Esophagus muscularis mucosa (tissue), 4 donors: ENCODE measurements at regions of chr3 and their contacts with region 1.

Region 1: DNA sequence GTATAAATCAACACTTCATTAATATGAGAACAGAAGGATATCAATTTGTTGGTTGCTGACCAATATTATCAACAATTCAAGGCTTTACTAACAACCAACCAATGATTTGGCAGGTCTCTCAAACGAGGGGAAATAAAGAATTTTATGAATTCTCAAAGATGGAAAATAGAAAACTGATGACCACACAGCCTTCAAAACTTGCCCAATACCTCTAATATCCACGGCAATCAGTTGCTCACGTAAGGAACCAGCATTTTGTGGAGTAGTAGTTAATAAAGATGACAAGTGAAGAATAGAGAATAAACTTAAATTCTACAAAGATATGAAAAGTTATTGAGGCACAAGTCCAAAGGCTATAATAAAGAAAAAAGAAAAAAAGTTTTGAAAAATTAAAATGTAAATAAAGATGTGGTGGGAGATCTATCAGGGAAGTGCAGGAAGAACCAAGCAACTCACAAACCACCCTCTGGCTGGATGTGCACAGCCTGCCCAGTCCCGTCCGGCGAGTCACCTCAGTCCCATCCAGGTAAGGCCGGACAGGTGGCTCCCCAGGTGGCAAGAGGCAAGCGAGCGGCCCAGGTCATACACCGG is 808 bp downstream of the GK5 start:
- DNase-seq: no peak
- H3K4me3 ChIP-seq: peak overlapping the region; percentile 64 to 92 (median 80)
- H3K27ac ChIP-seq: peak overlapping the region; percentile 84 to 95 (median 90)
- H3K4me1 ChIP-seq: peaks cover 10 to 37% (median 20%) of the 10 kb centered on the region in 4 donors
- H3K27me3 ChIP-seq: no peaks in the 10 kb centered on the region
- CTCF ChIP-seq: no peak
- EP300 ChIP-seq: no peak
- POLR2A ChIP-seq: no peak

Region 2: DNA sequence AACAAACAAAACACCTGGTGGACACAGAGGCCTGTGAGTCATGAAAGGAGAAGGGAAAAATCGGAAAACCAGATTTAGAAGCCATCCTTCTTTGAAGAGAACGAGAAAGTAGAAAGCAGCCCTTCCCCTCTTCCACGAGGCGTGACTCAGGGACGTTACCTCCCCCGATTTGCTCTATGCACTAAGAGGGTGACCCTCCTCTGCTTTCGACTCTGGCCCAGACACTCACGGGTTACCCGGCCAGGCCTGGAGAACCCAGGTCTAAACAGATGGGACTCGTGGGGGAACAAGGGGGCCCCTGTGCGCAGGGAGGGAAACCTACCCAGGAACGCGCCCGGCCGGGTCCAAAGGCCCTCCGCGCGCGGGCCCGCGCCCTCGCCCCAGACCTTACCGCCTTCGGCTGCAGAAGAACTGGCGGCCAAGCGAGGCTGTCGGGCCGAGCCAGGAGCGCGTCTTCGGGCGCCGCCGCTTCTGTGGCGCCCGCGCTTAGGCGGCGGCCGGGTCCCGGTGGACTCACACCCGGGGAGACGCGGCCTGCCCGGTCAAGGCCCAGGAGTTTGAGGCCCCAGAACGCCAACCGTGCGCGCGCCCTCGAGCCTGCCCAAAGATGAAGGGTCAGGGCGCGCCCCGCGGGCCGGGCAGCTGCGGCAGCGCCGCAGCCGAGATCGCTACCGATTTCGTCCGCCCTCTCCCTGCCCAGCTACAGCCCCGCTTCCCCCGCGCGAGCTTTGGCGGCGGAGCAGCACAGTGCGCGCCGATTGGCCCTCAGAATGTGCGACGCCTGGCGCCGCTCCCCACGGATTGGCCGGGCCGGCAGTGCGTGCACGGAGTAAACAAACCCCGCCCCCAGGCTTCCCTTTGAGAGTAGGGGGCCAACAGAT is 75.5 kb before region 1 on chr3 and contains the start of gene TFDP2:
- intact Hi-C with region 1: loop called (anchors 5 kb)
- DNase-seq: peak; percentile 95
- H3K4me3 ChIP-seq: peak within 1 kb of the TSS; percentile 87 to 93 (median 90)
- H3K27ac ChIP-seq: peak within 1 kb of the TSS; percentile 93 to 97 (median 95)
- H3K4me1 ChIP-seq: peaks cover 15 to 50% (median 45%) of the 10 kb centered on the region in 4 donors
- H3K27me3 ChIP-seq: no peaks in the 10 kb centered on the region
- CTCF ChIP-seq: peak in 1 of 3 experiments; percentile 3
- EP300 ChIP-seq: no peak
- POLR2A ChIP-seq: no peak
- total RNA-seq, gene TFDP2: 41.9 to 134 (median 47.3) TPM

Region 3: GRCh38 chr3:142366436-142366835 is 141.9 kb after region 1 on chr3:
- intact Hi-C with region 1: no loop called
- DNase-seq: no peak
- H3K4me3 ChIP-seq: no peak overlapping the region
- H3K27ac ChIP-seq: no peak overlapping the region
- H3K4me1 ChIP-seq: no peaks in the 10 kb centered on the region
- H3K27me3 ChIP-seq: no peaks in the 10 kb centered on the region
- CTCF ChIP-seq: no peak
- EP300 ChIP-seq: no peak
- POLR2A ChIP-seq: no peak